H1 (cell line): ENCODE measurements at regions of chr1 and their contacts with region 1.

Region 1: DNA sequence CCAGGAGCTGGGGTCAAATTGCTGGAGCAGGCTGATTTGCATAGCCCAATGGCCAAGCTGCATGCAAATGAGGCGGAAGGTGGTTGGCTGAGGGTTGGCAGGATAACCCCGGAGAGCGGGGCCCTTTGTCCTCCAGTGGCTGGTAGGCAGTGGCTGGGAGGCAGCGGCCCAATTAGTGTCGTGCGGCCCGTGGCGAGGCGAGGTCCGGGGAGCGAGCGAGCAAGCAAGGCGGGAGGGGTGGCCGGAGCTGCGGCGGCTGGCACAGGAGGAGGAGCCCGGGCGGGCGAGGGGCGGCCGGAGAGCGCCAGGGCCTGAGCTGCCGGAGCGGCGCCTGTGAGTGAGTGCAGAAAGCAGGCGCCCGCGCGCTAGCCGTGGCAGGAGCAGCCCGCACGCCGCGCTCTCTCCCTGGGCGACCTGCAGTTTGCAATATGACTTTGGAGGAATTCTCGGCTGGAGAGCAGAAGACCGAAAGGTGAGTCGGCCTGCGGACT is at the start of gene GADD45A:
- DNase-seq: peak; percentile 96 to 97
- H3K4me3 ChIP-seq: peak within 1 kb of the TSS; percentile 84 to 98 (median 90)
- H3K27ac ChIP-seq: no peak within 1 kb of the TSS; the same call in 1 of the 2 replicates
- H3K4me1 ChIP-seq: peaks cover 0 to 9% (median 5%) of the 10 kb centered on the region in 4 experiments; a peak in 5 of 7 replicates
- H3K27me3 ChIP-seq: no peaks in the 10 kb centered on the region
- CTCF ChIP-seq: no peak
- EP300 ChIP-seq: peak in 1 of 2 experiments; percentile 32; a peak in 1 of 3 replicates
- POLR2A ChIP-seq: peak; percentile 96 to 98
- RAD21 ChIP-seq: peak; percentile 10; a peak in 1 of 4 replicates
- total RNA-seq, gene GADD45A: 15.5 and 15.6 TPM in 2 replicates

Region 2: GRCh38 chr1:67674260-67675011 is 10.7 kb before region 1 on chr1:
- CTCF ChIA-PET with region 1: interaction called, 4 read pairs
- POLR2A ChIA-PET with region 1: interaction called, 34 read pairs
- DNase-seq: no peak
- H3K4me3 ChIP-seq: no peak overlapping the region
- H3K27ac ChIP-seq: no peak overlapping the region
- H3K4me1 ChIP-seq: no peaks in the 10 kb centered on the region
- H3K27me3 ChIP-seq: no peaks in the 10 kb centered on the region
- CTCF ChIP-seq: no peak
- EP300 ChIP-seq: no peak
- POLR2A ChIP-seq: no peak
- RAD21 ChIP-seq: no peak

Region 3: DNA sequence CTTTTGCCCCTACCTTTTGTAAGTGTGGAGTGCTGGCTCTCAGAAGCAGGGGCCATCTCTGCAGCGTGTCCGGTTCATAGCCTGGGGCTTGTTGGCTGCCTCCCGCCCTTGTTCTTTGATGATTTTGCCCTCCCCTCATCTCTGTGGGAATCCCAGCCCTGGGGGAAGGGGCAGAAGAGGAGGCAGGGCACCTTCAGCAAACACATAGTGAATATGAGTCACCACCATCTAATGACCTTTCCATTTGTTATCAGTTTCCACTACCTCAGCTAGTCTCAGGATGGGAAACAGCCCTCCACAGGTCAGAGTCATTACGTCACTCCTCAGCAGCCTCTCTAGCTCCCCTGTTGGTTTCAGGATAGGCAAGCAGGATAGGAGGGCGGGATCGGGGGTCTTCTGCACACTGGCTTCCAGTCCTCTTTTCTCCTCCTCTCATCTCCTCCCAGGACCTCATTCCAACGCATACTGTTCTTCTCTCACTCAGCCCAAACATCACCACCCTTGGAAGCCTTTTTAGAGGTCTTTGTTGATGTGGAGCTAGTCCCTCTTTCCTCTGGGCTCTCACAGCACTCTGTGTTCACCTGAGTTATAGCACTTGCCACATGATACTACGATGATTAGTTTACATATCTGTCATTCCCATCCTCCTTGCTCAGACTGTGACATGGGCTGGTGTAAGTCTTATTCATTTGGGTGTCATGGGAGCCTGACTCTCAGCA is 15.7 kb after region 1 on chr1:
- CTCF ChIA-PET with region 1: interaction called, 12 read pairs
- POLR2A ChIA-PET with region 1: interaction called, 24 read pairs
- DNase-seq: peak in 1 of 2 experiments; percentile 31
- H3K4me3 ChIP-seq: no peak overlapping the region
- H3K27ac ChIP-seq: no peak overlapping the region
- H3K4me1 ChIP-seq: peaks cover 0 to 3% (median 0%) of the 10 kb centered on the region in 4 experiments; a peak in 2 of 7 replicates
- H3K27me3 ChIP-seq: no peaks in the 10 kb centered on the region
- CTCF ChIP-seq: peak; percentile 50 to 61 (median 52)
- EP300 ChIP-seq: no peak
- POLR2A ChIP-seq: no peak
- RAD21 ChIP-seq: peak; percentile 30 to 36

Region 4: DNA sequence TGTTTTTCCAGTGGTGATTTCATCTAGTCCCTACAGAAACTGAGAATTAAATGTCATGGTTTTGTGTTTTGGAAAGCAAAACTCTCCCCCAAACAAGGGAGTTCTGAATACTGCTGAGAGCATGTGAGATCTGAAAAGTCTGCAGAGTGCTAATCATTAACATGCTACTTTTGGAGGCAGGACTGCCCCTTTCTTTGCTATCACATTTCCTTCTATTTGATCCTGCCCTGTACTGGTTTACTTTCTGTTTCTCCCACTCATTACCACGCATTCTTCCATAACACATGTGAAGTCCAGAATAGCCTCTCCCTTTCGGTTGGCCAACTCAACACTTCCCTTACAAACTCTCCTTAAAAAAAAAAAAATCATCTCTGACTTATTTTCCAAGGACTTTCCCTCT is 63.5 kb after region 1 on chr1:
- CTCF ChIA-PET with region 1: interaction called, 6 read pairs
- POLR2A ChIA-PET with region 1: interaction called, 15 read pairs
- DNase-seq: no peak
- H3K4me3 ChIP-seq: peak overlapping the region in 1 of 4 experiments; percentile 44; a peak in 2 of 8 replicates
- H3K27ac ChIP-seq: no peak overlapping the region
- H3K4me1 ChIP-seq: peaks cover 9 to 38% (median 33%) of the 10 kb centered on the region in 4 experiments; a peak in 6 of 7 replicates
- H3K27me3 ChIP-seq: no peaks in the 10 kb centered on the region
- CTCF ChIP-seq: no peak
- EP300 ChIP-seq: no peak
- POLR2A ChIP-seq: no peak
- RAD21 ChIP-seq: no peak